ENCODE measurements at regions of chr1 and their contacts with region 1.

Region 1: GRCh38 chr1:2523191-2523890 is 3.1 kb downstream of the PANK4 start:
- DNase-seq: no peak
- H3K4me3 ChIP-seq: no peak overlapping the region
- H3K27ac ChIP-seq: no peak overlapping the region
- H3K4me1 ChIP-seq: peaks cover 15% of the 10 kb centered on the region; the same call in 1 of the 2 replicates
- H3K27me3 ChIP-seq: no peaks in the 10 kb centered on the region

Region 2: GRCh38 chr1:1451696-1452367 is 1071.5 kb before region 1 on chr1:
- in situ Hi-C with region 1: no loop called
- DNase-seq: no peak
- H3K4me3 ChIP-seq: no peak overlapping the region
- H3K27ac ChIP-seq: no peak overlapping the region
- H3K4me1 ChIP-seq: no peaks in the 10 kb centered on the region
- H3K27me3 ChIP-seq: peaks cover 8% of the 10 kb centered on the region

Region 3: DNA sequence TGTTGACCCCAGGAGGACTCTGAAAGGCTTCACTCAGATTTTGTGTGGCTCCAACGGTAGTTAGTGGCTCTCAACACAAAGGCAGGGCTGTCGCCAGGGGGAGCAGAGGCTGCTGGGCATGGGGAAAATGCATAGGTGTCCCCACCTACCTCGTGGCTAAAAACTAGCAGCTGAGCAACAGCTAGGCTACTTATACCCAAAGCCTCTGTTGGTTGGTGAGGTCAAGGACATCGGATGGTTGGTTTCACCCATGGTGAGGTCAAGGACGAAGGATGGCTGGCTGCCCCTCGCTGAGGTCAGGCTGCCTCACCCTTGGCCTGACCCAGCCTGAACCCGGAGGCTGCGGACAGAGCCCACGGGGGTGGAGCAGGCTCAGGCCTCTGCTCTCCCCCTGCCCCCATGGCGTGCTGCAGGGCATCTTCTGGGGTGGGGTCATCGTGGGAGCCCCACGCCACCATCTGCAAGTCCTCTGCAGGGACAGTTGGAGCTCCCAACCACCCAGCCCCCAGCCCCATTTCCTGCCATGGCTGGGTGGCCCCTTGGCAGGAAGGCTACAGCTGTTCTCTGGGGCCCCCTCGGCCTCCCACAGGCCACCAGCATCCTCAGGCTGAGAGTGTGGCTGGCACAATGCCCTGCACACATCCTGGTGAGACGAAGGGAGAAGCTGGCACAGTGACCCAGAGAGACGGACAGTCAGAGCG is 623.9 kb before region 1 on chr1:
- in situ Hi-C with region 1: no loop called
- DNase-seq: no peak
- H3K4me3 ChIP-seq: no peak overlapping the region
- H3K27ac ChIP-seq: no peak overlapping the region
- H3K4me1 ChIP-seq: peaks cover 5% of the 10 kb centered on the region; the same call in 1 of the 2 replicates
- H3K27me3 ChIP-seq: no peaks in the 10 kb centered on the region

Region 4: GRCh38 chr1:2194898-2195673 is 328.3 kb before region 1 on chr1:
- in situ Hi-C with region 1: loop called (anchors 25 kb)
- DNase-seq: peak; percentile 97
- H3K4me3 ChIP-seq: peak overlapping the region; percentile 85
- H3K27ac ChIP-seq: peak overlapping the region; percentile 81
- H3K4me1 ChIP-seq: peaks cover 26% of the 10 kb centered on the region
- H3K27me3 ChIP-seq: no peaks in the 10 kb centered on the region

Region 5: DNA sequence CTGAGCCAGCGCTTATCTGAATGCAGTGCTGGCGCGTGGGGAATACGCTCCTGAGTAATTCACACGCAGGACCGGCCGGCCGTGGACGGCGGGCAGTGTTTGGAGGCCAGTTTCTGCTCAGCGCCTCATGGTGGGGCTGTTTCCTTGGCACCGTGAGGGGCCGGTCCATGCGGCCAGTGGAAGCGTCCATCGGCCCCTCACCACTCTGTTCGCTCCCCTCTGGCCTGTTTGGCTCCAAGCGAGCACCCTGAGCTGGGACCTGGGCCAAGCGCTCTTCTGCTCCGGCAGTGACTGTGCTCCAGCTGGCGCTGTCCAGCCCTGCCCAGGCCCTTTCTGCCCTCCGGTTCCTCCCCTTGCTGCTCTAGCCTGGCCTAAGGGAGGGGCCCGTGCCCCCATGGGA is 63.6 kb before region 1 on chr1:
- in situ Hi-C with region 1: no loop called
- DNase-seq: peak; percentile 62
- H3K4me3 ChIP-seq: no peak overlapping the region
- H3K27ac ChIP-seq: no peak overlapping the region
- H3K4me1 ChIP-seq: no peaks in the 10 kb centered on the region
- H3K27me3 ChIP-seq: peaks cover 25% of the 10 kb centered on the region

Region 6: GRCh38 chr1:2575801-2576663 is 52.7 kb after region 1 on chr1:
- in situ Hi-C with region 1: no loop called
- DNase-seq: no peak
- H3K4me3 ChIP-seq: no peak overlapping the region
- H3K27ac ChIP-seq: no peak overlapping the region
- H3K4me1 ChIP-seq: no peaks in the 10 kb centered on the region
- H3K27me3 ChIP-seq: peaks cover 14% of the 10 kb centered on the region

Measured in GM23248 (cell line).